Ovary (tissue), 10 donors: ENCODE measurements at regions of chr4 and their contacts with region 1.

Region 1: DNA sequence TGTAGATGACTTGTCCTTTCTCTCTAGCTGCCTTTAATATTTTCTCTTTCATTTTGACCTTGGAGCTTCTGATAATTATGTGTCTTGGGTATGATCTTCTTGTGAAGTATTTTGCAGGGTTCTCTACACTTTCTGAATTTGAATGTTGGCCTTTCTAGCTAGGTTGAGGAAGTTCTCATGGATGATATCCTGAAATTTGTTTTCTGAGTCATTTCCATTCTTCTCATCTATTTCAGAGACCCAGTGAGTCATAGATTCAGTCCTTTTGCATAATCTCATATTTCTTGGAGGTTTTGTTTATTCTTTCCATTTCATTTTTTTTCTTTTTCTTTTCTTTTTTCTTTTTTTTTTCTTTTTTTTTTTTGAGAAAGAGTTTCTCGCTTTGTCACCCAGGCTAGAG is 585.7 kb upstream of the PABPC4L start:
- DNase-seq: no peak
- H3K4me3 ChIP-seq: no peak overlapping the region
- H3K27ac ChIP-seq: no peak overlapping the region
- H3K4me1 ChIP-seq: no peaks in the 10 kb centered on the region
- H3K27me3 ChIP-seq: no peaks in the 10 kb centered on the region
- CTCF ChIP-seq: no peak
- EP300 ChIP-seq: no peak
- POLR2A ChIP-seq: no peak

Region 2: DNA sequence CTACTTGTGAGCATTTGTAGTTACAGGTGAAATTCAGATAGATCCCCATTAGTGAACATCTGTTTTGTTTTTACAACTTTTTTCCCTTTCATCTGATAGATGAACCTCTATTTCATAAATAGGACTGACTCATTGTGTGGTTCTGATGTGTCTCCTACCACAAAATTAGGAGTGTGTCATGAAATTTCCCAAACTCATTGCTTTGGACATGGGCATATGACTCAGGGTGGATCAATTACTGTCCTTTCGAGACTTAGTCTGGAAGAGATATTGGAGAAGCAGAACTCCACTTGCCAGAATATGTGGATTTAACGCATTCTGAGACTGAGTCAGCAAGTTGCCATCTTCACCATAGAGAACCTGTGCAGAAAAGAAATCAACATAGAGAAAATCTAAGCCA is 1691.7 kb before region 1 on chr4:
- intact Hi-C with region 1: loop called in 1 of 4 experiments (anchors 5 kb)
- DNase-seq: no peak
- H3K4me3 ChIP-seq: no peak overlapping the region
- H3K27ac ChIP-seq: no peak overlapping the region
- H3K4me1 ChIP-seq: no peaks in the 10 kb centered on the region
- H3K27me3 ChIP-seq: no peaks in the 10 kb centered on the region
- CTCF ChIP-seq: no peak
- EP300 ChIP-seq: no peak
- POLR2A ChIP-seq: no peak

Region 3: DNA sequence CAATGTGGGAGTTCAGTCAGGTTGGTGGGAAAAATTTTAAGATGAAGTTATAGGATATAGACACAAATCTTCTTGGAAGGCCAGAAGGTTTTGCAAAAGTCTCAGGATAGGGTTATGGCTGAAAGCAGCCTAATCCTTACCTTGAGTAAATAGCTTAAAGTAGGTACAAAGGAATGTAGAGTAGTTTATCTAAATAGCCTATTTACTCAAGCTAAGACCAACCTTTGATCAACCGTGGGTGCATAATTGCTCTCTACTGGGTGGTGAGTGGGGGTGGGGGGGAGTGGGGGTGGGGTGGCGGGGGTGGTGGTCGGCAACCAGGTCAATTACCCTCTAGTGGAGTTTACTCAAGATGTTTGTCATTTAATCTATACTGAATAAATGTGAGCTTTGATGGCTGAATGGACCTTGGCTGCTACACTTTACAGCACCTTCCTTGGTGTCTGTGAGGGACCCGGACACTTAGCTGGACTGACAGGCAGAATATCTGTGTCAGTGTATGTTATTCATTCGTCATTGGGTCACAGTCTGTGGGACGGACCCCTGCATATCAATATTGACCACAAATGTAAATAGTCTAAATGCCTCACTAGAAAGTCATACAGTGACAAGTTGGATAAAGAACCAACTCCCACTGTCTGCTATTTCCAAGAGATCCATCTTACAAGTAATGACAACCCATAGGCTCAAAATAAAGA is 40.1 kb before region 1 on chr4:
- intact Hi-C with region 1: no loop called
- DNase-seq: no peak
- H3K4me3 ChIP-seq: no peak overlapping the region
- H3K27ac ChIP-seq: no peak overlapping the region
- H3K4me1 ChIP-seq: no peaks in the 10 kb centered on the region
- H3K27me3 ChIP-seq: no peaks in the 10 kb centered on the region
- CTCF ChIP-seq: no peak
- EP300 ChIP-seq: no peak
- POLR2A ChIP-seq: no peak